Brain microvascular endothelial cell (primary cell): ENCODE measurements at regions of chr10 and their contacts with region 1.

Region 1: GRCh38 chr10:127906548-127907377 is at the start of gene PTPRE:
- DNase-seq: no peak
- H3K4me3 ChIP-seq: peak within 1 kb of the TSS; percentile 75
- H3K27ac ChIP-seq: peak within 1 kb of the TSS; percentile 88
- H3K27me3 ChIP-seq: no peaks in the 10 kb centered on the region
- CTCF ChIP-seq: peak; percentile 57

Region 2: GRCh38 chr10:128011175-128011979 is 104.6 kb after region 1 on chr10:
- in situ Hi-C with region 1: loop called (anchors 10 kb)
- DNase-seq: peak; percentile 57
- H3K4me3 ChIP-seq: no peak overlapping the region
- H3K27ac ChIP-seq: no peak overlapping the region
- H3K27me3 ChIP-seq: no peaks in the 10 kb centered on the region
- CTCF ChIP-seq: peak; percentile 98